ENCODE measurements at regions of chr12 and their contacts with region 1.

Region 1: DNA sequence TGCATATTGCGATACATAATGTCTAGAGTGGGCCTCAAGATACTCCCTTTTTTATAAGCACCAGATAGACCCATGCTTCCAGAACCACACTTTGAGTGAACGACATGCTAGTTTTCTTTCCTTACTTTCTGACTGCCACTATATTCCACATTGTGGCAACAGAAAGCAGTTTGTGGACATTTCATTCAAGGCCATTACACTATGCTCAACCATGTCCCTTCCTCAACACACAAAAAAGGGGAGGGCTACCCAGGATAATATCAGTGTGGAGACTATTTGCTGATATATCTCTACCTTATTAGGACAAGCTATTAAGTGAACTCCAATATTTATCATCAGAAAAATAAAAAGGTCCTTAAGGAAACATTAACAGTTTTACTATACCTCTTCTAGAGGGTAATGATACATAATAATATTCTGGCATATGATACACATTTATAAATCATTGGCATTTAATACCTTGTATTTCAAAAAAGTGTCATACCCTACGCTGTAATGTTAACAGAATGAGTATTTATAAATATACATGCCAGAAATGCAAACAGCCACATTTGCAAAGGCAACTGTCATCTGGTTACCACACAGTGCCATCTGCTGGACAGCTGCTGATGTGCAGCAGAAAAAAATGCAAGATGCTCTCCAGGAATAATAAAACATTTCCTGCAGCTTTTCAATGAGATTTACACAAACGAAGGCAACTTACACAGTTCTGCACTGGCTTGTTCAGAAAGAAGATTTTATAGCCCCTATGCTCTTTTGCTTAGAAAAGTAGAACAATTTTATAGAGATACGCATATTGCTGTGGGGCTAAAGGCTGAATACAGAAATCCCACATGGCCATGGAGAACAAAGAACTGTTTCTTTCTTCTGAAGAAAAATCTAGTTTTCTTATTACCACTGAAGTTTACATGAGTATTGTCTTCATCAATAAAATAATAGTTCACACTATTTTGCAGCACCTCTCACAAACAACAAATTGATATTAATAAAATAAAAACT is 182.2 kb upstream of the GRIP1 start:
- DNase-seq: peak; percentile 76
- H3K4me3 Mint-ChIP-seq: no peak overlapping the region
- H3K27ac Mint-ChIP-seq: no peak overlapping the region
- H3K4me1 Mint-ChIP-seq: peaks cover 20% of the 10 kb centered on the region
- H3K27me3 Mint-ChIP-seq: no peaks in the 10 kb centered on the region
- CTCF ChIP-seq: peak; percentile 87

Region 2: DNA sequence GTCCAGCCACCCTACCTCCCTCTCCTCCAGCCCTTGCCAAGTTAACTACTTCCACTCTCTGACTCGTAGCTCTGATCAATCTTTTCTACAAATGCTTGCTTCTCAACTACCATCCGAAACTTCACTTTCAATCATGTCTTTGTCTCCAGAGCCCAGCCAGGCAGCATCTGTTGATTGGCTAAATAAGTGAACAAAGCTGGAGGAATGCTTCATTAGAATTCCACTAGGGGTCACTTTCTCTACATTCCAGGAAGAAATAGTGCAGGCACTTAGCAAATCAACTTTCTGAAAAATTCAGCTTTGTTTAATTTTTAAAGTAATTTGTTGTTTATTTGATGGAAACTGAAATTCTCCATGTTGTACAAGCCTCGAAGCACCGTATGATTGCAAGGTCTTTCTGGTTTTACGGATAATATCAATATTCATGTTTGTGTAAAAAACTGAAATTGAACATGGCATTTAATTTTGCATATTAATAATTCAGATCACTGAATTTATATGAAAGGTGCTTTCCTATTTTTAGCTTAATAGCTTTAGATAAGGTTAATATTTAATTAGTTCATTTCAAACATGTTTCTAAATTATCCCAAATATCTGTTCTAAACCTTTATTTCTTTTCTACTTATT is 591.2 kb before region 1 on chr12:
- CTCF ChIA-PET with region 1: no interaction called
- intact Hi-C with region 1: loop called (anchors 10 kb)
- DNase-seq: peak; percentile 25
- H3K4me3 Mint-ChIP-seq: no peak overlapping the region
- H3K27ac Mint-ChIP-seq: no peak overlapping the region
- H3K4me1 Mint-ChIP-seq: no peaks in the 10 kb centered on the region
- H3K27me3 Mint-ChIP-seq: no peaks in the 10 kb centered on the region
- CTCF ChIP-seq: peak; percentile 59

Region 3: DNA sequence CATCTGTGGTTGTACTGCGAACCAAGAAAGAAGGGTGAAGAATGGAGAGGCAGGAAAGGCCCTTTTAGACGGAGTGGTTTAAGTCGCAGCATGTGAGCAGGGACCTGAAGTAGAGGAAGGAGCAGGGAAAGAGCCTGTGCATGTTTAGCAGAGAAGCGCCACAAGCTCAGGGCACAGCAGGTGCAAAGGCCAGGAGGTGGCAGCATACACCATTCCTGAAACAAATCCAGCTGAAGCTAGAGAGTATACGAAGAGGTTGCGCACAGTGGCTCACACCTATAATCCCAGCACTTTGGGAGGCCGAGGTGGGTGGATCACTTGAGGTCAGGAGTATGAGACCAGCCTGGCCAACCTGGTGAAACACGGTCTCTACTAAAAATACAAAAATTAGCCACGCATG is 508.9 kb before region 1 on chr12:
- CTCF ChIA-PET with region 1: no interaction called
- intact Hi-C with region 1: loop called (anchors 5 kb)
- DNase-seq: peak; percentile 58
- H3K4me3 Mint-ChIP-seq: no peak overlapping the region
- H3K27ac Mint-ChIP-seq: no peak overlapping the region
- H3K4me1 Mint-ChIP-seq: no peaks in the 10 kb centered on the region
- H3K27me3 Mint-ChIP-seq: no peaks in the 10 kb centered on the region
- CTCF ChIP-seq: peak; percentile 29

Region 4: DNA sequence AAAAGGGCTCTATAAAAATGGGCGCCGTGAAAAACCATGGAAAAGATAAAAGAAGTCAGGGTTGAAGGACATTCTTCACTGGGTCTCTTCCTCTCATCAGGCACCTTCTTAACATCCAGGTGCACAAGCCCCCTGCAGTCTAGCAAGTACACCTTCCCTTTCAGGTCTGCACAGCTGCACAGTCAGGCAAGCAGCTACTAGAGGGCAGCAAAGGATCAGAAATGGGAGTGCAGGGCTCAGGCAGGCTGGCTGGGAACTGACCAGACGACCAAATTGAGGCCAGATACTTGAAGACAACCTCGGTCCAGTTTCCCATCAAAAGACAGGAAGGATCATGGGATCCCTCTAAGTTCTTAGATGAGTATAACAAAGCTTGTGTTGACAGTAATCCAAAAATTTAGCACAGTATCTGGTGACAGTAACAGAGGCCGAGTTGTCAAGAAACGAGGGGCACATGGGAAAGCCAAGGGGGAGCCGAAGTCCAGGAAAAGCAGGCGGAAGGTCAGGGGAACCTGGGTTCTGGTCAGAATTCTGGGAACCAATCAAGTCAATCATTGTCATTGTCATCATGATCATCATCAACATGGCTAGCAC is 172.1 kb before region 1 on chr12:
- CTCF ChIA-PET with region 1: interaction called, 3 read pairs
- intact Hi-C with region 1: loop called (anchors 1 kb)
- DNase-seq: peak; percentile 80
- H3K4me3 Mint-ChIP-seq: no peak overlapping the region
- H3K27ac Mint-ChIP-seq: no peak overlapping the region
- H3K4me1 Mint-ChIP-seq: peaks cover 8% of the 10 kb centered on the region
- H3K27me3 Mint-ChIP-seq: no peaks in the 10 kb centered on the region
- CTCF ChIP-seq: peak; percentile 82

Region 5: DNA sequence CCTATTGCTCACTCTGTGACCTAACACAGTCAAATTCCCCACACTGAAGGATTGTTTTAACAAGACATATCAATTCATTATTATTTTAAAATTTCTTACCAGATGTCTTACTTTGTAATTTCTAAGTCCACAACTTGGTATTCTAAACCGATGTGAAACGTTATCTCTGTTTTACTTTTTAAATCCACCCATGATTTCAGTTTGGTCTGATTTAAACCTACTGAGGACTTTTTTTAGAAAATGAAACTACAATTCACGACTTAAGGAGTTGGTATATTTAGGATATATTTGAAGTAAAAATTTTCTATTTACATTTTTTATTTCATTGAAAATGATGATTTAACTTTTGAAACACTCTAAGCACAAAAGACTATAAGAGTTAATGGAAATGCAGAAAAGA is 147.1 kb before region 1 on chr12:
- CTCF ChIA-PET with region 1: interaction called, 3 read pairs
- intact Hi-C with region 1: loop called (anchors 5 kb)
- DNase-seq: no peak
- H3K4me3 Mint-ChIP-seq: no peak overlapping the region
- H3K27ac Mint-ChIP-seq: no peak overlapping the region
- H3K4me1 Mint-ChIP-seq: peaks cover 27% of the 10 kb centered on the region
- H3K27me3 Mint-ChIP-seq: no peaks in the 10 kb centered on the region
- CTCF ChIP-seq: no peak

Region 6: DNA sequence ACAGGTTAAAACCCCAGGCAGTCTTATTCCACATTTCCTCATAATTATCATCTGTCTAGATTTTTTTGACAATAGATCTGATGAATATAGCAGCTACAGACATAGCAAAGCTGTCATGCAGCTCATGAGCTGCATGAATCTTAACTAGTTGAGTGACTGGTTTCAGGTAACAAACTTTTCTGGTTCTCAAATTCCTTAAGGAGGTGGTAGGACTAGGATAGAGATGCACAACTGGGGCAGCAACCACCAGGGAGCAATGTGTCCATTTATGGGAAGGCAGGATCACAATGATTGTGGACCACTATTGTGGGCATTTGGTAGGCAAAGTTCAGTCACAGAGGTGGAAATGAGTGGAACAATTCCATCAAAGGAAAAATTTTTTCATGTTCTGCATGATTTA is 15.4 kb after region 1 on chr12:
- CTCF ChIA-PET with region 1: no interaction called
- intact Hi-C with region 1: no loop called
- DNase-seq: peak; percentile 8
- H3K4me3 Mint-ChIP-seq: no peak overlapping the region
- H3K27ac Mint-ChIP-seq: no peak overlapping the region
- H3K4me1 Mint-ChIP-seq: no peaks in the 10 kb centered on the region
- H3K27me3 Mint-ChIP-seq: no peaks in the 10 kb centered on the region
- CTCF ChIP-seq: no peak

Region 7: DNA sequence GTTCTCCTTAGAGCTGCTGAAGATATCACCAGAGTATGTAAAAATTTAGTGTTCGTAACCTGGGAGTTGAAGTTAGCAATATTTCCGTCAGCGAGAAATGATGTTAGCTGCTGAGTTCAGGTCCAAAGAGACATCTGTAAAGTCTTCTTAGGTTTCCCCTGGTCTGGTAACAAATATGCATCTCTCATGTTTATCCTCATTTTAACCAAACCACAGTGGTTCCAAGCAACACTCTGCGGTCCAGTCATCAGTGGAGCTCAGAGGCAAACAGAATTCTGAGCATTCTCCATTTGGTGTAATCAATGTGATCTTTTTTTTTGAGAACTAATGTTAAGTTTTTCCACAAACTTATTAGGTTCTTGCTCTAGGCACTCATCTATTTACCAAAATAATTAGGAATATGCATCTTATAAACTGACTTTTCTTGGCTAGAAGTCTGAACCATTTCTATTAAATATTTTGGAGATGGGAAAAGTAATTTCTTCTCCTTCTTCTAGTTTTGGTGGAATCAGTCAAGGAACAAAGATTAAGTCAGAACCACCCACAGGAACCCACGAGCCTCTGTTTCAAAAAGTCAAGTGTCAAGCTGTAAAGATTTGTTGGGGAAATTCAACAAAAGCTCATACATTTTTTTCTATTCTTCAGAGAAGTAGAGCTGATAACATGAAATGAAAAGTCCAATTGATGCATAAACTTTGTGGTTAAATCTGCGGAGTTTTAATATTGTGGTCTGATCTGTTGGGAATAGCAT is 1233.8 kb after region 1 on chr12:
- CTCF ChIA-PET with region 1: no interaction called
- intact Hi-C with region 1: no loop called
- DNase-seq: no peak
- H3K4me3 Mint-ChIP-seq: no peak overlapping the region
- H3K27ac Mint-ChIP-seq: no peak overlapping the region
- H3K4me1 Mint-ChIP-seq: no peaks in the 10 kb centered on the region
- H3K27me3 Mint-ChIP-seq: peaks cover 56% of the 10 kb centered on the region
- CTCF ChIP-seq: no peak